Activated CD4-positive, alpha-beta T cell treated with anti-CD3 and anti-CD28 coated beads, Interleukin-2, amount 10 ng/mL, durations not matched to agents 24 days and 14 days (primary cell): ENCODE measurements at regions of chr21 and their contacts with region 1.

Region 1: GRCh38 chr21:38349111-38349746 is 92.4 kb downstream of the KCNJ15 start:
- DNase-seq: no peak
- H3K4me3 Mint-ChIP-seq: no peak overlapping the region
- H3K27ac Mint-ChIP-seq: peak overlapping the region; percentile 88
- H3K4me1 Mint-ChIP-seq: peaks cover 40% of the 10 kb centered on the region
- H3K27me3 Mint-ChIP-seq: no peaks in the 10 kb centered on the region

Region 2: GRCh38 chr21:38244885-38245545 is 104.2 kb before region 1 on chr21:
- intact Hi-C with region 1: loop called (anchors 1 kb)
- DNase-seq: peak; percentile 88
- H3K4me3 Mint-ChIP-seq: peak overlapping the region; percentile 38
- H3K27ac Mint-ChIP-seq: peak overlapping the region; percentile 89
- H3K4me1 Mint-ChIP-seq: peaks cover 30% of the 10 kb centered on the region
- H3K27me3 Mint-ChIP-seq: peaks cover 7% of the 10 kb centered on the region

Region 3: DNA sequence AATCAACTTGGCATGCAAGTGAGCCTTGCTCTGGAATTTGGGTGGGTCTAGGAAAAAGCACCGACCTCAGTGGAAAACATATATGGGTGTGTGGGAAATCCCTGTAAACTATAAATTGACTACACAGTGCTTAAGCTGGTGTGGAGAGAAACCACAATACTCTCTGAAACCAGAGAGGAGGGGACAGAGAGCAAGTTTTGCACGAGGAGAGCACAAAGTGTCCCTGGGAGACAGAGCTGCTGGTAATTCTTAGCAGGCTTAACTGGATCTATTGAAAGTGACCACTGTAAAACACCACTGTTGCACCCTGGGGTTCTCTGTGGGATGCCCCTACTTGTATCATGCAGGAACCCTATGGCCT is 79.7 kb before region 1 on chr21:
- intact Hi-C with region 1: loop called (anchors 1 kb)
- DNase-seq: no peak
- H3K4me3 Mint-ChIP-seq: peak overlapping the region; percentile 1
- H3K27ac Mint-ChIP-seq: peak overlapping the region; percentile 81
- H3K4me1 Mint-ChIP-seq: peaks cover 28% of the 10 kb centered on the region
- H3K27me3 Mint-ChIP-seq: peaks cover 5% of the 10 kb centered on the region

Region 4: GRCh38 chr21:38277501-38278131 is 71.6 kb before region 1 on chr21:
- intact Hi-C with region 1: loop called (anchors 2 kb)
- DNase-seq: no peak
- H3K4me3 Mint-ChIP-seq: no peak overlapping the region
- H3K27ac Mint-ChIP-seq: peak overlapping the region; percentile 5
- H3K4me1 Mint-ChIP-seq: peaks cover 10% of the 10 kb centered on the region
- H3K27me3 Mint-ChIP-seq: peaks cover 2% of the 10 kb centered on the region

Region 5: DNA sequence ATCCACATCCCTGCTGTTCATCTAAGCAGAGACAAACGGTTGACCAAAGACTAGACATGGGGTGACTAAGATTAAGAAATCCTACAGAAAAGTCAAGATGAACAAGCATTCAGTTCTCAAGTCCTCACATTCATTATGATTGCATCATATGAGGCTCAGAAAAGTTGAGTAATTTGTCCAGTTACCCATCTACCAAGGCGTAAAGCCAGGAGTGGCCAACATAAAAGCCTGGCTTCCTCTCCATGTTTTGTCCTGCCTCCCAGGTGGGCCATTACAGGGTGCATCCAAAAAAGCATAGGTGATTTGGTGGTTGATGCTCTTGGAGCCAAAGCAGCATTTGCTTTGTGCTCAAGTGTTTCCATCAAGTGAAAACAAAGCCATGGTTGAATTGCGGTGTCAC is 38.6 kb before region 1 on chr21:
- intact Hi-C with region 1: loop called (anchors 5 kb)
- DNase-seq: no peak
- H3K4me3 Mint-ChIP-seq: no peak overlapping the region
- H3K27ac Mint-ChIP-seq: no peak overlapping the region
- H3K4me1 Mint-ChIP-seq: peaks cover 5% of the 10 kb centered on the region
- H3K27me3 Mint-ChIP-seq: no peaks in the 10 kb centered on the region

Region 6: DNA sequence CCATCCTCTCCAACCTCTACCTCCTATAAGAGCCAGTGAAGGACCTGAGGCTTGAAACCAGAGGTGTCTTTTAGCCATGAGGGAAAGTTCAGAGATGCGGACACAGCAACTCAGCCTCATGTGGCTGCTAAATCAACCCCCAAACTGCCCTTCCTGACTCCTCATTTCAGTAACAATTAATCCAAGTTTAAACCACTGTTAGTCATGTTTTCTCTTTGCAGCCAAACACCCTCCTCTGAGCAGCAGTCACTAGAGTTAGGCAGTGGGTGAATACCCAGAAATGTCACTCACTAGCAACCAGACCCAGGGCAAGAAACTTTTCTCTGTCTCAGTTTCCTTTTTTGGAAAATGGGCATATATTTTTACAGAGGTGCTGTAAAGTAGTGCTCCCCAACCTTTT is 21.2 kb before region 1 on chr21:
- intact Hi-C with region 1: loop called (anchors 1 kb)
- DNase-seq: no peak
- H3K4me3 Mint-ChIP-seq: peak overlapping the region; percentile 18
- H3K27ac Mint-ChIP-seq: peak overlapping the region; percentile 58
- H3K4me1 Mint-ChIP-seq: peaks cover 15% of the 10 kb centered on the region
- H3K27me3 Mint-ChIP-seq: peaks cover 2% of the 10 kb centered on the region